ENCODE measurements at regions of chr11 and their contacts with region 1.

Region 1: GRCh38 chr11:65382033-65382807 is at the start of gene SLC25A45:
- DNase-seq: peak; percentile 82 to 95 (median 91)
- ATAC-seq: peak; percentile 91
- H3K4me3 ChIP-seq: peak within 1 kb of the TSS; percentile 76
- H3K4me3 Mint-ChIP-seq: peak within 1 kb of the TSS; percentile 82 to 98 (median 93)
- H3K27ac ChIP-seq: peak within 1 kb of the TSS; percentile 82
- H3K27ac Mint-ChIP-seq: peak within 1 kb of the TSS; percentile 97 to 100 (median 99)
- H3K4me1 ChIP-seq: peaks cover 42 to 45% of the 10 kb centered on the region in 2 donors
- H3K4me1 Mint-ChIP-seq: peaks cover 31 to 56% (median 46%) of the 10 kb centered on the region in 7 donors
- H3K27me3 ChIP-seq: no peaks in the 10 kb centered on the region
- H3K27me3 Mint-ChIP-seq: no peaks in the 10 kb centered on the region
- total RNA-seq, gene SLC25A45: 20.2 to 90.6 (median 34.1) TPM

Region 2: GRCh38 chr11:65172600-65172999 is 209.6 kb before region 1 on chr11:
- CTCF ChIA-PET with region 1: no interaction called
- POLR2A ChIA-PET with region 1: no interaction called
- intact Hi-C with region 1: no loop called
- DNase-seq: no peak
- ATAC-seq: no peak
- H3K4me3 ChIP-seq: no peak overlapping the region
- H3K4me3 Mint-ChIP-seq: no peak overlapping the region
- H3K27ac ChIP-seq: no peak overlapping the region
- H3K27ac Mint-ChIP-seq: no peak overlapping the region
- H3K4me1 ChIP-seq: no peaks in the 10 kb centered on the region
- H3K4me1 Mint-ChIP-seq: peaks cover 0 to 11% (median 5%) of the 10 kb centered on the region in 7 donors
- H3K27me3 ChIP-seq: no peaks in the 10 kb centered on the region
- H3K27me3 Mint-ChIP-seq: peaks cover 0 to 2% (median 0%) of the 10 kb centered on the region in 5 donors

Region 3: GRCh38 chr11:65354265-65355012 is 27.8 kb before region 1 on chr11 and contains the start of gene TIGD3:
- CTCF ChIA-PET with region 1: interaction called, 3 read pairs
- POLR2A ChIA-PET with region 1: no interaction called
- intact Hi-C with region 1: loop called (anchors 1 to 2 kb)
- DNase-seq: peak; percentile 84 to 96 (median 93)
- ATAC-seq: peak; percentile 99
- H3K4me3 ChIP-seq: peak within 1 kb of the TSS; percentile 68
- H3K4me3 Mint-ChIP-seq: peak within 1 kb of the TSS; percentile 90 to 97 (median 92)
- H3K27ac ChIP-seq: peak within 1 kb of the TSS; percentile 73
- H3K27ac Mint-ChIP-seq: peak within 1 kb of the TSS; percentile 75 to 94 (median 89)
- H3K4me1 ChIP-seq: peaks cover 5 to 9% of the 10 kb centered on the region in 2 donors
- H3K4me1 Mint-ChIP-seq: peaks cover 11 to 25% (median 19%) of the 10 kb centered on the region in 7 donors
- H3K27me3 ChIP-seq: no peaks in the 10 kb centered on the region
- H3K27me3 Mint-ChIP-seq: peaks cover 0 to 13% (median 0%) of the 10 kb centered on the region in 5 donors
- total RNA-seq, gene TIGD3: 0.39 to 2.0 (median 1.6) TPM

Region 4: GRCh38 chr11:65418711-65419459 is 36.7 kb after region 1 on chr11:
- CTCF ChIA-PET with region 1: interaction called, 17 read pairs
- POLR2A ChIA-PET with region 1: interaction called, 278 read pairs
- intact Hi-C with region 1: loop called (anchors 1 kb)
- DNase-seq: peak; percentile 33 to 89 (median 48)
- ATAC-seq: peak; percentile 51
- H3K4me3 ChIP-seq: peak overlapping the region; percentile 82
- H3K4me3 Mint-ChIP-seq: peak overlapping the region; percentile 92 to 100 (median 97)
- H3K27ac ChIP-seq: peak overlapping the region; percentile 98
- H3K27ac Mint-ChIP-seq: peak overlapping the region; percentile 97 to 100 (median 99)
- H3K4me1 ChIP-seq: peaks cover 36 to 46% of the 10 kb centered on the region in 2 donors
- H3K4me1 Mint-ChIP-seq: peaks cover 36 to 65% (median 45%) of the 10 kb centered on the region in 7 donors
- H3K27me3 ChIP-seq: no peaks in the 10 kb centered on the region
- H3K27me3 Mint-ChIP-seq: peaks cover 0 to 15% (median 0%) of the 10 kb centered on the region in 5 donors

Region 5: DNA sequence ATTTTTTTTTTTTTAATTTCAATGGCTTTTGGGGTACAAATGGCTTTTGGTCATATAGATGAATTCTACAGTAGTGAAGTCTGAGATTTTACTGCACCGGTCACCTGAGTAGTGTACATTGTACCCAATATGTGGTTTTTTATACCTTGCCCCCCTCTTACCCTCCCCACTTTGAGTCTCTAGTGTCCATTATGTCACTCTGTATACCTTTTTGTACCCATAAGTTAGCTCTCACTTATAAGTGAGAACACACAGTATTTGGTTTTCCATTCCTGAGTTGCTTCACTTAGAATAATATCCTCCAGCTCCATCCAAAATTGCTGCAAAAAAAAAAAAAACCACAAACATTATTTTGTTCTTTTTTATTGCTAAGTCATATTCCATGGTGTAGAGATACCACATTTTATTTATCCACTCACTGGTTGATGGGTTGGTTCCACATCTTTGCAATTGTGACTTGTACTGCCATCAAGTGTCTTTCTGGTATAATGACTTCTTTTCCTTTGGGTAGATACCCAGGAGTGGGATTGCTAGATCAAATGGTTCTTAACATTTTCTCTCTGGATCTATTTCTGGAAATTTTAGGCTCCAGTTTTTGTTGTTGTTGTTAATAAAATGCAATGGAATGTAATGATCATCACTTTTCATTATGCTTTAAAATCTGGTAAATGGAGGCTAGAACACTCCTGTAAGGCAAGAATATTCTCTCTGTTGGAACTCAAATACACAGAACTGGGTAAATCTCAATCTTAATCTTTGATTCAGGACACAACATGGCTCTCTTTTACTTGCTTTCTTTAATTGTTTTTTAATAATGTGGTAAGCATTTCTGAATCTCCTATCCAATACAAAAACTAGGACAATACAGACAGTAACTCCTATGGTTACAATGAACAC is 50.7 kb after region 1 on chr11:
- CTCF ChIA-PET with region 1: interaction called, 5 read pairs
- POLR2A ChIA-PET with region 1: interaction called, 278 read pairs
- intact Hi-C with region 1: loop called (anchors 1 kb)
- DNase-seq: peak in 7 of 9 donors; percentile 49 to 76 (median 62)
- ATAC-seq: peak; percentile 36
- H3K4me3 ChIP-seq: no peak overlapping the region
- H3K4me3 Mint-ChIP-seq: peak overlapping the region in 6 of 10 donors; percentile 25 to 94 (median 48)
- H3K27ac ChIP-seq: no peak overlapping the region
- H3K27ac Mint-ChIP-seq: peak overlapping the region; percentile 69 to 100 (median 87)
- H3K4me1 ChIP-seq: peaks cover 47 to 51% of the 10 kb centered on the region in 2 donors
- H3K4me1 Mint-ChIP-seq: peaks cover 55 to 89% (median 81%) of the 10 kb centered on the region in 7 donors
- H3K27me3 ChIP-seq: no peaks in the 10 kb centered on the region
- H3K27me3 Mint-ChIP-seq: no peaks in the 10 kb centered on the region

Region 6: DNA sequence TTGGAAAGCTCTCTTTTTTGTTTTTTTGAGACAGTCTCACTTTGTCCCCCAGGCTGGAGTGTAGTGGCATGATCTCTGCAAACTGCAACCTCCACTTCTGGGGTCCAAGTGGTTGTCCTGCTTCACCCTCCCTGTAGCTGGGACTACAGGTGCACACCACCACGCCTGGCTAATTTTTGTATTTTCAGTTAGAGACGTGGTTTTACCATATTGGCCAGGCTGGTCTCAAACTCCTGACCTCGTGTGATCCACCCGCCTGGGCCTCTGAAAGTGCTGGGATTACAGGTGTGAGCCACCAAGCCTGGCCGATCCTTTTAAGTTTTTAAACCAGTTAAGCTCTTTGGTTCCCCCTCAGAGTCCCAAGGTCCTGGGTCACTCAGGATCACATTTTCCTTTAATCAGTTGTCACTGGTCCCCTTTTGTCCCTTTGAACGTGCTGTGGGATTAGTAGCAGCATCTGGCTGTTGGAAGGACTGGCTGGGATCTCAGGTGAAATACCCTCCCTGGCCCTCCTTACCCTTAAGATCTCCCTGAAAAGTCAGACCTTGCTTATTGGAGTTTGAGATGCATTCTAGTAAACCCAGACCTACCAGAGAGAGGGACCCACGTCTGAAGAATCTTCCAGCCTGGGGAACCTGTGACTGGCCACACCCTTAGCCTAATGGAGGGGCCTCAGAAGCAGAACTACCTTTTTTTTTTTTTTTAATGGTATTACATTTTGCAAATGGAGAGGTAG is 124.7 kb after region 1 on chr11:
- CTCF ChIA-PET with region 1: interaction called, 11 read pairs
- POLR2A ChIA-PET with region 1: interaction called, 460 read pairs
- intact Hi-C with region 1: loop called (anchors 1 kb)
- DNase-seq: peak in 7 of 9 donors; percentile 40 to 65 (median 58)
- ATAC-seq: peak; percentile 57
- H3K4me3 ChIP-seq: peak overlapping the region; percentile 99
- H3K4me3 Mint-ChIP-seq: no peak overlapping the region
- H3K27ac ChIP-seq: peak overlapping the region; percentile 99
- H3K27ac Mint-ChIP-seq: peak overlapping the region in 8 of 9 donors; percentile 78 to 92 (median 88)
- H3K4me1 ChIP-seq: peaks cover 35 to 38% of the 10 kb centered on the region in 2 donors
- H3K4me1 Mint-ChIP-seq: peaks cover 46 to 56% (median 49%) of the 10 kb centered on the region in 7 donors
- H3K27me3 ChIP-seq: no peaks in the 10 kb centered on the region
- H3K27me3 Mint-ChIP-seq: peaks cover 0 to 4% (median 0%) of the 10 kb centered on the region in 5 donors

Region 7: DNA sequence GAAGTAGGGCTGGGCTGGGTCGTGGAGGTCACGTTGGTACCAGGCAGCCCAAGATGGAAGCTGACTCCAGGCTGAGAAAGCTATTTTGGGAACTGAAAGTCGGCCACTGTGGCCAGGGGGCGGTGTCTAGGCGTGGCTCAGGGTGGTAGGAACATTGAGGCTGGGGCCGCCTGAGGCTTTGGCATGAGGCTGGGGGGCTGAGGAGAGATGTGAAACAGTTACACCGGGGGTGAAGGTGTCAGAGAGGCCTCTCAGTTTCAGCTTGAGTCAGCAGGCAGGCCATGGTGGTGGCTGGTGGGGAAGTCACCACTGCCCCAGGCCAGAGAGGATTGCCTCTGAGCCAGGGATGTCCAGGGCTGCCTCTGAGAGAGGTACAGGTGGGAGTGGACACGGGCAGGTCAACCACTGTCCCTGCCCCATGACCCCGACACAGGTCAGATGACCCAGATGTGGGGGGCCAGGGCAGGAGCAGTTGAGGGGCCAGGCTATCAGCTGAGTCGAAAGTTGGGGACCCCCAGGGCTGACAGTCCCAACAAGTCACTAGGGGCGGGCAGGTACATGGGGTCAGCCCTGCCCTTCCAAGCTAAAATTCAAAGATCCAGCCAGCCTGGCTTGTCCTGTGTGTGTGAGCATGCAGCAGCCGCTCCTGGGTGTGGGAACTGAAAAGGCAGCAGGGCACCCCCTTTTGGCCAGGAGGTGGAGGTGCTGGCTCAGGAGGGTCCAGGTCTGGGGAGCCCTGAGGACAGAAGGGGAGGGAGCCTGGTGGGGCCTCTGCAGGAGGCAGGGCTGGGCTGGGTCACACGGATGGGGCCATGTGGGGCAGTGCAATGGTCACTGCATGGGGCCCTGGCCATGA is 206.2 kb after region 1 on chr11:
- CTCF ChIA-PET with region 1: no interaction called
- POLR2A ChIA-PET with region 1: no interaction called
- intact Hi-C with region 1: loop called in 1 of 2 experiments (anchors 1 kb)
- DNase-seq: peak; percentile 35 to 83 (median 75)
- ATAC-seq: peak; percentile 91
- H3K4me3 ChIP-seq: no peak overlapping the region
- H3K4me3 Mint-ChIP-seq: peak overlapping the region in 1 of 10 donors; percentile 76
- H3K27ac ChIP-seq: peak overlapping the region; percentile 43
- H3K27ac Mint-ChIP-seq: peak overlapping the region; percentile 38 to 86 (median 76)
- H3K4me1 ChIP-seq: peaks cover 11 to 16% of the 10 kb centered on the region in 2 donors
- H3K4me1 Mint-ChIP-seq: peaks cover 16 to 43% (median 21%) of the 10 kb centered on the region in 7 donors
- H3K27me3 ChIP-seq: no peaks in the 10 kb centered on the region
- H3K27me3 Mint-ChIP-seq: no peaks in the 10 kb centered on the region

Measured in naive thymus-derived CD4-positive, alpha-beta T cell (primary cell).